ENCODE measurements at regions of chr1 and their contacts with region 1.

Region 1: DNA sequence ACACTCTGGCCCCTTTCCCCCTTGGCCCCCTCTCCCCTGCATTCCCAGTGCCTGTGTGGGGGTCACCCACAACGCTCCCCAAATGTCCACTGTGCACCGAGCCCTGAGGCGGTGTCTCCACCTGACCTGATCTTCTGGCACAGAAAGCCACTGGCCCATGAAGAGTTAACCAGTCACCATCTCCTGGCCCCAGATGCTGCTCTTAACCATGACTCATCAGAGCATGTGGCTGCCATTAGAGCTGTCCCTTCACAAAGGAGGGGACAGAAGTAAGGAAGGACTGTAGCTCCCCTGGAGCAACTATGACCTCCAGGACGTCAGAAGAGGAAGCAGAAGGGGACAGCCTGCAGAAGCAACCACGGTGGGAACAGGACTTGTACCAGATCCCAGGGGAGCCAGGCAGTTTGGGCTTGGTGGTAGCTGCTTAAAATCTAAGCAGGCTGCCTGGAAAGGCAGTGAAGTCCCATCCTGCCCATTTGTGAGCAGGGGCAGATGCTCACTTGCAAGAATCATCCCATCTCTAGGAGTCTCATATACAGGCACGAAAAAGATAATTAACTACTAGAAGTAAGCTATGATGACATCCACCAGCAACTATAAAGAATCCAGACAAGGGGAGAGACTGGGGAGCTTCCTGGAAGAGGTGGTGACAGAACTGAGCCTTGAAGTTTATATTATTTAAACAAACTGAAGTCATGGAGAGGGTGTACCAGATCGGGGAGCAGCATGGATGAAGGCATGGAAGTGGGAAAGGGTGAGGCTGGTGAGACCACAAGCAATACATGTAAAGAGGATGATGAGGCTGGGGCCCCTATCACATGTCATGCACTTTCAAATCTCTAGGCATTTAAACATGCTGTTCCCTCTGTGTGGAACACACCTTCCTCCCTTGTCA is 1.1 kb upstream of the TTC39A start:
- ATAC-seq: peak; percentile 54 to 90 (median 82)
- H3K4me3 ChIP-seq: peak overlapping the region in 2 of 5 donors; percentile 39 to 41
- H3K27ac ChIP-seq: peak overlapping the region; percentile 32 to 49
- H3K4me1 ChIP-seq: peaks cover 14% of the 10 kb centered on the region in 2 donors

Region 2: DNA sequence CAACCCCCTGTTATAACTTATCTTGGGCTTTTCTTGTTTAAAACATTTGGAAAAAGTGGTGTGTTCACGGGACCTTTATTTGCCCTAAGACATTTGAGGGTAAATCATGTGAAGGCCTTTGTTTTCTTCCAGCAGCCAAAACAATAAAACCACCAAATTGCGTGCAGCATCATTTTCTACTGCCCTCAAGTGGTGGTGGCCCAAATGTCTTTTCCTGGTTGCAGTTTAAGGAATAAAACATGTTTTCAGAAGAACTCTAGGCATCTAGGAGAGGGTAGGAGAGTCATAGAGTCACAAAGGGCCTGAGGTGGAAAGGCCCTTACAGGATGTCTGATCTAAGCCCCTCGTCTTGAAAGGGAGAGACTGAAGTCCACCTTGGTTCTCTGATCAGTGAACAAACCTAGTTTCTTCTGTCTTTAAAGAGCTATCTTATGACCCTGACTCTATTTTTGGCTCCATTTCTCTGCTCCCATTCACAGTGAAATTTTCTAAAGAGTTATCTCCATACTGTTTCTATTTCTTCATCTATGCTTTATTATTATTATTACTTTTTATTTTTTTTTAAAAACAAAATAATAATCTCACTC is 203.6 kb after region 1 on chr1:
- in situ Hi-C with region 1: loop called in 1 of 9 experiments (anchors 25 kb)
- ATAC-seq: peak in 7 of 8 experiments; percentile 27 to 82 (median 43)
- H3K4me3 ChIP-seq: no peak overlapping the region
- H3K27ac ChIP-seq: no peak overlapping the region
- H3K4me1 ChIP-seq: peaks cover 0 to 2% of the 10 kb centered on the region in 2 donors